ENCODE measurements at regions of chr12 and their contacts with region 1.

Region 1: DNA sequence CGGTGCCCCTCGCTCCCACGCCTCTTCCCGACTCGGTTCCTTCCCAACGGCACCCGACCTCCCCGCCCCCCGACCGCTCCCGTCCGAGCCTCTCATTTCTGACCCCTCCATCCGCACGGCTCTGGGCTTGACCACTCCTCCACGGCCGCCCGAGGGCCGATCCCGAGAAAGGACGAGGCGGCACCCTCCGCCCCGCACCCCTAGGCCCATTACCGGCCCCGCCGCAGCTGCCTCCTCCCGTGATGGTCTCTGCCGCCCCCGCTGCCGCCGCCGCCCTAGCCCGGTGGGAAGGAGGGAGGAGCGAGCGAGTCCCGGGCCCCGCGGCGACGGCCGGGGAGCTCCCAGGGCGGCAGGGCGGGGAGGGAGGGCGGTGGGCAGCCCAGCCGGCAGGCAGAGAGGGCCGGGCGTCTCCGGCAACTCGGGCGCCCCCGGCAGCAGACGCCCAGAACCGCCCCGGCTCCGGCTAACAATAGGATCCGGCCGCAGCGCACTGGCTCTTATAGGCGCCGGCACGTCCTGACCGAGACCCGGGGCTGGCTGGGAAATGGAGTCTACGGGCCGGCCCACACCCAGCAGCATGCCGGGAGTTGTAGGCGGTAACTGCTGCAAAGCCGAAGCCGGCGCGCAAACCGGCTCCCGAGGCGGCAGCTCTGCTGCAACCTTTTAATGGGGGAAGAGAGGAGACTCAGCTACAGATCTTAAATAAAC is at the start of gene CSRNP2:
- DNase-seq: peak; percentile 96
- H3K4me3 Mint-ChIP-seq: peak within 1 kb of the TSS; percentile 92
- H3K27ac Mint-ChIP-seq: peak within 1 kb of the TSS; percentile 71
- H3K4me1 Mint-ChIP-seq: peaks cover 42% of the 10 kb centered on the region
- H3K27me3 Mint-ChIP-seq: no peaks in the 10 kb centered on the region
- total RNA-seq, gene CSRNP2: 14.7 to 16.3 TPM

Region 2: GRCh38 chr12:51246254-51246853 is 163.1 kb after region 1 on chr12:
- CTCF ChIA-PET with region 1: no interaction called
- POLR2A ChIA-PET with region 1: interaction called, 12 read pairs
- DNase-seq: peak; percentile 57
- H3K4me3 Mint-ChIP-seq: peak overlapping the region; percentile 1
- H3K27ac Mint-ChIP-seq: peak overlapping the region; percentile 77
- H3K4me1 Mint-ChIP-seq: peaks cover 48% of the 10 kb centered on the region
- H3K27me3 Mint-ChIP-seq: no peaks in the 10 kb centered on the region